Colonic mucosa (tissue), 4 donors: ENCODE measurements at regions of chr22 and their contacts with region 1.

Region 1: GRCh38 chr22:44697423-44698141 is 4.4 kb upstream of the PRR5 start:
- DNase-seq: peak; percentile 86
- H3K4me3 ChIP-seq: no peak overlapping the region
- H3K27ac ChIP-seq: no peak overlapping the region
- H3K4me1 ChIP-seq: peaks cover 5% of the 10 kb centered on the region
- H3K27me3 ChIP-seq: no peaks in the 10 kb centered on the region
- CTCF ChIP-seq: peak; percentile 83

Region 2: GRCh38 chr22:44291674-44292360 is 405.8 kb before region 1 on chr22:
- intact Hi-C with region 1: no loop called
- DNase-seq: no peak
- H3K4me3 ChIP-seq: no peak overlapping the region
- H3K27ac ChIP-seq: no peak overlapping the region
- H3K4me1 ChIP-seq: no peaks in the 10 kb centered on the region
- H3K27me3 ChIP-seq: no peaks in the 10 kb centered on the region
- CTCF ChIP-seq: no peak

Region 3: GRCh38 chr22:44735540-44736488 is 38.2 kb after region 1 on chr22:
- intact Hi-C with region 1: loop called (anchors 2 kb)
- DNase-seq: peak; percentile 89
- H3K4me3 ChIP-seq: no peak overlapping the region
- H3K27ac ChIP-seq: no peak overlapping the region
- H3K4me1 ChIP-seq: peaks cover 5% of the 10 kb centered on the region
- H3K27me3 ChIP-seq: no peaks in the 10 kb centered on the region
- CTCF ChIP-seq: peak; percentile 99